Posterior cingulate gyrus (tissue), 11 donors: ENCODE measurements at regions of chr5 and their contacts with region 1.

Region 1: GRCh38 chr5:76867827-76868693 is 18.2 kb downstream of the S100Z start:
- DNase-seq: peak in 7 of 10 donors; percentile 23 to 82 (median 62)

Region 2: GRCh38 chr5:77015938-77016569 is 148.0 kb after region 1 on chr5:
- intact Hi-C with region 1: loop called (anchors 2 kb)
- DNase-seq: no peak

Region 3: DNA sequence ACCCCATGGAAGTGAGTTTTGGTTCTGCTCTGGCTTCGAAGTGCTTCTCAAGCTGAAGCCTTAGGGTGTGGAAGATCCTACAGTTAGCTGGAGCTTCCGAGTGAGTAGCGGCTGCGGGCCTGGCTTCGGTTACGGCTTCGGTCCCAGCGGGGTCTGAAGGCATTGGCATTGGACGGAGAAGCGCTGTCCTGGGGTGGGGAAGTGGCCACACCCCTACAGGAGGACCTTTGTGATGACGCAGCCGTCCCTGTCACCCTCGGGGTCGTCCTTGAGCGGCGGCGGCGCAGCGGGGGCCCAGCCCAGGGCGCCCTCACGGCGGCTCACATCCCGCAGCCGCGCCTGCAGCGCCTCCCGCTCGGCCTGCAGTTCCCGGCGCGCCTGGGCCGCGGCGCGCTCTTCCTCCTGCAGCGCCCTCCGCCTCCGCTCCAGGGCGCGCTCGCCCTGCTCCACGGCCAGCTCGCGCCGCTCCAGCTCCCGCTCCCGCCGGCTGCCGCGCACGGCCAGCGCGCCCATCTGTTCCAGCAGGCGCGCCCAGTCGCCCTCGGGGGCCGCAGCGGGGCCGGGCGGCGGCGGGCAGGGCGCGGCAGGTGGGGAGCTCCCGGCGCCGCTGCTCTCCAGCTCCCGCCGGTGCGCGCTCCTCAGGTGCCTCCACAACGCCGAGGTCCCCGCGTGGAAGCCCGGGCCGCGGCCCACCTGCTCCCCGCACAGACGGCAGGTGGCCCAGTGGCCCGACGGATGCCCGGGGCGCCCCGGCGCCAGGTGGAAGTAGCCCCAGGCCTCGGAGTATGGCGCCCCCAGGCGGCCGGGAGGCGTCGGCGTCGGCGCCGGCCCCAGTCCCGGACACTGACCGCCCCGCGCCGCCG is 209.1 kb after region 1 on chr5:
- intact Hi-C with region 1: loop called (anchors 5 kb)
- DNase-seq: peak; percentile 42 to 96 (median 67)

Region 4: DNA sequence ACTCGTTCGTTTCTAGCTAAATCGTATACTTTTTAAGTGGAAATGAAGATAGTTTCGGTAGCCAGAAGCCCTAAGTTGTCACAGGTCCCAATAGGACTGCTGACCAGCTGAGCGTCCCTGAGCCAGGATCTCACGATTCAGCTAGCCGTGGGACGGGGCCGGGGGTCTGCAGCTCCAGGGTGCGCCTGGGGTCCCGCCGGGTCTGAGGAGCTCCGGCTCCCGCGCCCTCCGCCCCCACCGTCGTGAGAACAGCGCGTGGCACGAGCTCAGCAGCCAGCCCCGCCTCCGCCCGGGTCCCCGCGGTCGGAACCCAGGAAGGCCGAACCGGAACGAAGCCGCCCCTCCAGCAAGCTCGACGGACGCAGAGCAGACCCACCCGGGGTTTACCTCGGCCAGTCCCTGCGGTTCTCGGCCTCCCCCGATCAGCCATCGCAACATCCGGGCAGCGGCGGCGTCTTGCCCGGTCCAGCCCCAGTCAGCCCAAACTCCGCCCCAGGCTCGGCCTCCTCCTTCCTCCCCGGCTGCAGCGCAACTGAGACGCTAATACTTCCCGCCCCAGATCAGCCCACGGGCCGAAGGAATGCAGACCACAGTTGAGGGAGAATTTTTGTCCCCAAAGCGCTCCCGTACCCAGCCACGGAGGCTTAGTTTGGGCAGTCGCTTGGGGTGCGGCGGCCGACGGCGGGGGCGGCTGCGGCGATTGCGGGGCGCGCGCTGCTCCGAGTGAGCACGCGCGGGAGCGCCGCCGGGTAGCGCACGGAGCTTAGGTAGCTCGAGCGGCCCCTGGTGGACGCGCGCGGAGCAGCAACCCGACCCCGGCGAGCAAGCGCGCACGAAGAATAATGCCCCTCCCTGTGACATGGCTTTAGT is 624.0 kb after region 1 on chr5 and contains the start of gene WDR41:
- intact Hi-C with region 1: loop called (anchors 5 kb)
- DNase-seq: peak; percentile 78 to 98 (median 84)